RWPE1 (cell line): ENCODE measurements at regions of chr20 and their contacts with region 1.

Region 1: DNA sequence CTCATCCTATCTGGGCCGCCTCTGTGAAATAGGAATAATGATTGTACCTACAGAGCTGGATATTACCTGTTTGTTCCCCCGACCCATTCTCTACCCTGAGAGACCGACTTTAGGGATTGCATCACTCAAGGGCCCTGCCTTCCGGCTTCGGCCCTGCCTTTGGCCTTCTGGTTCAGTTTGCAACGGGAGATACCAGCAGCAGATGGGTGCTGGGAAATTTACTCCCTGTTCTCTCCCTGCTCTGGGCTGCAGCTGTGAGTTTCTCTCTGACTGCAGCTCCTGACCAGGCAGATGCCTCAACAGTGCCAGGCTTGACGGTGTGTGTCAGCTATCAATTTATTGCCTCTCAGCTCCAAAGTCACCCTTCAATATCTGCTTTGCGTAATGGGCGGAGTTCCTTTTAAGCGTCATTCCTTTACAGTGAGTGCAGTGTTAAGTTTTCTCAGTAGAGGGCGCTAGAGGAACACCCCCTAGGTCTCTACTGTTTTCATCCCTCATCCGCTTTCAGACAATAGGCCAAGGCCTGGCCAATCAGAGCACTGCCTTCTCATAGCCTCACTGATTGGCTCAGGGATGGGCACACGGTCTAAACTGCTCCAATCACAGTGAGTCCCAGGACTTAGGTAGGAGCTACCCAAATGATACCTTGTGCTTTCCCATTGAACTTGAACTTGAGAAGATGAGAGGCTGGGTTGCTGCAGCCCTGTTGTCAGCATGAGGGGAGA is 30.0 kb downstream of the KCNG1 start:
- DNase-seq: peak; percentile 99
- H3K27ac ChIP-seq: peak overlapping the region; percentile 98
- CTCF ChIP-seq: peak; percentile 98

Region 2: DNA sequence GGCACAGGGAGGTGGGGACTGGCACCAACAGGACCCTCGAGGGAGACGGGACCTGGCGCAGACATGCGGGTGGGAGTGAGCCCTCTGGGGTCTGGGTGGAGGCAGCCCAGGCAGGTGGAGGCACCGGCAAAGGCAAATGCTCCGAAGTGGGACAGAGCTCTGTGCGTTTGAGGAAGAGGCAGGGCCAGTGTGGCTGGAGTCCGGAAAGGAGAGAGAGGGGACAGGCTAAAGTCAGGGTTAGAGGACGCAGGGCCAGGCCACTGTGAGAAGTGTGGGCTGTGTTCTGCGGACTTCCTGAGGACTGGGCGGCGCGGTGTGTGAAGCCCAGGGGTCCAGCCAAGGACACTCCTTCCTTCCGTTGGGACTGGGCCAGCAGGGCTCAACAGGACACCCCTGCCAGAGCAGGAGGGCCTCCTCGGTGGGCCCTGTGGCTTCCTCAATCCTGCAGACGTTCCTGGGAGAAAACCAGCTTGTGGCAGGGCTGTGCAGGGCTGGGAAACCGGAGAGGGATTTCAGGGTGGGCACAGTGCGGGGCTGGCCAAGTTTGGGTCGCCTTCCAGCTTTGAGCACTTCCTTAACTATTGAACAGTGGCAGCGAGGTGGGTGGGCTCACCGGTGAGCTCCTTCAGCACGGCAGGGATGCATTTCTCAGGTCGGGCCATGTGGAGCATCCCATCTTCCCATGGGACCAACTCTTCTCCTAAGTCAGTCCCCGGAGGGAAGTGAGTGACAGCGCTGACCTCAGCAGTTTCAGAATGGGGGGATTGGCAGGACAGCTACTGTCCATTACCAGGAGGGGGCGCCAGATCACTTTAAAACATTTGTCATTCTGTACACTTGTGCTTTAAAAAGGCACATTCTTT is 11.8 kb before region 1 on chr20:
- CTCF ChIA-PET with region 1: interaction called, 22 read pairs
- POLR2A ChIA-PET with region 1: no interaction called
- DNase-seq: peak; percentile 64
- H3K27ac ChIP-seq: peak overlapping the region; percentile 87
- CTCF ChIP-seq: peak; percentile 85; the same call in 1 of the 2 replicates

Region 3: DNA sequence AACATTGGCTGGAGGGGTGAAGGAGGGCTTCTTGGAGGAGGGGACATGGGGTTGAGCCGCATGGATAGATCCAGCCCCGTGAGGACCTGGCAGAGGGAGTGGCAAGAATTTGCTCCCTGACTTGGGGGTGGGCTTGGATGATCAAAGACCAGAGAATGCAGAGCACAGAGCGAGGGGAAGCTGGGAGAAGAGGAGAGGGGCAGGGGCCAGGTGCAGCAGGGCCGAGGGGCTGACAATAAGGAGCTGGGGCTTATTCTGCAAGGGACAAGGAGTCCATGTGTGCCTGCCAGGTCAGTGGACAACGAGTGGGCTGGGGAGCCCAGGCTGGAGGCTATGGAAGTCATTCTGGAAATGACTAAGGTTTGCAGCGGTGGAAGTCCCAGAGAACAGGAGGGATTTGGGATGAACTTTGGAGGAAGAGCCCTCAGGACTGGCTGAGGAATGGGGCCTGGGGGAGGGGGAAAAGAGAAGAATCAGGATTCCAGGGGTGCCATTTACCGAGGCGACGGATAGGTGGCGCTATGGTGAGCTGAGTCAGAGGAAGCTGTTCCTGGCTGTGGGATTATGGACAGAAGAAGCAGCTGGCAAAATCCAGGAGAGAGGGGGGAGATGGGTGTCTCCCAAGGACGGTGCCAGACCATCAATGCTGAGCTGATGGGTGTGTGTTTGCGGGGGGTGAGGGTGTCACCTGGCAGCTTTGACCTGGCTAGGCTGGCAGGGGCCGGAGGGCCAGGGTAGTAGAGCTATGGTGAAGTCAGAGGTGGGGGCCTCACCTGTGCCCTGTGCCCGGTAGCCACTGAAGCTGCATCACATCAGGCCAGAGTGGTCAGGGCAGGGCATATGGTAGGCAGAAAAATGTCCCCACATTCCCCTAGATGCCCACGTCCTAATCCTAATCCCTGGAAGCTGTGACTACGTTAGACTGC is 22.2 kb after region 1 on chr20:
- CTCF ChIA-PET with region 1: interaction called, 15 read pairs
- POLR2A ChIA-PET with region 1: no interaction called
- DNase-seq: peak; percentile 91
- H3K27ac ChIP-seq: no peak overlapping the region
- CTCF ChIP-seq: peak; percentile 80

Region 4: DNA sequence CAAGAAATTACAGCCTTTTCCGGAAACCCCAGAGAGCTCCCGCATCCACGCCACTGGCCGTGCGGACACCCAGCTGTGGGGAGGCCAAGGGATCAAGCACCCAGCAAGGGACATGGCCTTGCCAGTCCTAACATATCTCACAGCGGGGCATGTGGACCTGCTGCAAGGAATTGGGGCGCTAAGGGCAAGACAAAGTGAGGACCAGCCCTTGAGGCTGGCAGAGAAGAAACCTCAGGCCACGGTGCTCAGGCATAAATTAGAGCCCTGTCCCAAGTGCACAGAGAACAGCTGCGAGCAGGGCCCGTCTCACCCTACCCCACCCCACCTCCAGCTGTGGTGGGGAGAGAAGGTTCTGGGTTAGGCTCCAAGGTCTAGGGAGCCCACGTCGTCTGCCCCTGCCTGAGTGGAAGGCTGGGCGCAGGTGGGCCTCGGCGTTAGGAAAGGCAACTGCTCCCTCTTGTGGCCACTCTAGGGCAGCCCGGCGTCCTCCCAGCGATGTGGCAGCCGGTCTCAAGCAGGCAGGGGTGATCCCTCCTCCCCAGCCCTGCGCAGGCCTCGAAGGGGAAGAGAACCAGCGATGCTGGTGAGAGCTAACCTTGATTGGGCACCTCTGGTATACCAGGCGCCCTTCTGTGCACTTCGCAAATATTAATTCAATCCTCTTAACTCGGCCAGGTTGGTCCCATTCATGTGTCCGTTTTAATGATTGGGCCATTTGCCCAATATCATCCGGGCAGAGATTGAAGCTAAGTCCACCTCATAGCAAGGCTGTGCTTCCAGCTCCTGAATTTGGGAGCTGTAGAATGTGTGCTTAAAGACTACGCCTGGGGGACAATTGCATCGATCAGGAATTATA is 313.8 kb after region 1 on chr20:
- CTCF ChIA-PET with region 1: interaction called, 91 read pairs
- POLR2A ChIA-PET with region 1: no interaction called
- DNase-seq: peak; percentile 95
- H3K27ac ChIP-seq: no peak overlapping the region
- CTCF ChIP-seq: peak; percentile 99